Dendritic cell treated with granulocyte-macrophage colony-stimulating factor and Interleukin-4, amounts not matched to agents 40 ng/mL and 50 ng/mL, for 4 days (primary cell): ENCODE measurements at regions of chr14 and their contacts with region 1.

Region 1: GRCh38 chr14:24146978-24147760 is at the start of gene RNF31:
- H3K4me3 Mint-ChIP-seq: peak within 1 kb of the TSS; percentile 98
- H3K27ac Mint-ChIP-seq: peak within 1 kb of the TSS; percentile 91
- H3K4me1 Mint-ChIP-seq: peaks cover 59% of the 10 kb centered on the region
- H3K27me3 Mint-ChIP-seq: no peaks in the 10 kb centered on the region

Region 2: DNA sequence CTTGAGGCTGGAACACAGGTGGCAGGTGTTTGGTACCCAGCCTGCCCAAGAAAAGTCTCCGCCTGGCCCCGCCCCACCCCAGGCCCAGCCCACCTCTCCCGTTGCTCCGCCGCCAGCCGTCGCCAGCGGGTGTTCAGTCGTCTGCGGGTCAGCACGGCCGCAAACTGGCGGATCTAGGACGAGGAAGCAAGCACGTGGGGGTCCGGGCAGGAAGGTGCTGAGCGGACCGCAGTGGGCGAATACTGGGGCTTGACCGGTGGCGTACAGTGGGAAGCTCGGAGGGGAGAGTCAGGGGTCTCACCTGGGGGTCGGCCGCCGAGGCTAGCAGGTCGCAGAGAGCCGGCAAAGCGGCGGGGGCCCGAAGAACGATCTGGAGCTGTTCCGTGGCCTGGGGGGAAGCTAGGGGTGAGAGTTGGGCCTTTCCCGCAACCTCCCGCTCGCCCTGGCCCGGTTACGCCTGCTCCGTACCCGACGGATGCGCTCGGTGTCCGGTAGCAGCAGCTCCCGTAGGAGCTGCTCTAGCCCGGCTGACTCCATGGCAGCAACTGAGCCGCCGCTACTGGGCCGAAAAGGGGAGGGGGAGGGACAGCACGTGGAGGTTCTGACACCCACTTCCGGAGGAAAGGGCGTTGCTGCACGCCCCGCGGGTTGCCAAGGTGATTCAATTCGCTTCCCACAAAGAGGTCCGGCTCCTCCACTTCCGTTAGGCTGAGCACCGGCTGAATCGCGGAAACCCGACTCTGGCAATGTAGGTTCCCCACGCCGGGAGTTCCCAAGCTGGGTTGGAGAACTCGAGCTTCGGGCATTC is 41.3 kb after region 1 on chr14 and contains the start of gene IPO4:
- intact Hi-C with region 1: loop called (anchors 2 kb)
- H3K4me3 Mint-ChIP-seq: peak within 1 kb of the TSS; percentile 85
- H3K27ac Mint-ChIP-seq: peak within 1 kb of the TSS; percentile 81
- H3K4me1 Mint-ChIP-seq: peaks cover 47% of the 10 kb centered on the region
- H3K27me3 Mint-ChIP-seq: no peaks in the 10 kb centered on the region